HEK293 (cell line): ENCODE measurements at regions of chr1 and their contacts with region 1.

Region 1: GRCh38 chr1:107529502-107530149 is 388.8 kb downstream of the NTNG1 start:
- H3K4me3 ChIP-seq: no peak overlapping the region
- H3K27ac ChIP-seq: no peak overlapping the region
- H3K4me1 ChIP-seq: no peaks in the 10 kb centered on the region
- CTCF ChIP-seq: peak; percentile 61

Region 2: GRCh38 chr1:107277022-107277421 is 252.6 kb before region 1 on chr1:
- CTCF ChIA-PET with region 1: interaction called, 20 read pairs
- POLR2A ChIA-PET with region 1: no interaction called
- H3K4me3 ChIP-seq: no peak overlapping the region
- H3K27ac ChIP-seq: no peak overlapping the region
- H3K4me1 ChIP-seq: no peaks in the 10 kb centered on the region
- CTCF ChIP-seq: peak; percentile 39; the same call in 1 of the 2 replicates

Region 3: GRCh38 chr1:107430540-107431228 is 98.9 kb before region 1 on chr1:
- CTCF ChIA-PET with region 1: interaction called, 46 read pairs
- POLR2A ChIA-PET with region 1: no interaction called
- H3K4me3 ChIP-seq: no peak overlapping the region
- H3K27ac ChIP-seq: no peak overlapping the region
- H3K4me1 ChIP-seq: no peaks in the 10 kb centered on the region
- CTCF ChIP-seq: peak; percentile 66

Region 4: GRCh38 chr1:107477233-107477632 is 52.4 kb before region 1 on chr1:
- CTCF ChIA-PET with region 1: interaction called, 12 read pairs
- POLR2A ChIA-PET with region 1: no interaction called
- H3K4me3 ChIP-seq: no peak overlapping the region
- H3K27ac ChIP-seq: no peak overlapping the region
- H3K4me1 ChIP-seq: no peaks in the 10 kb centered on the region
- CTCF ChIP-seq: 0 out of 2 replicates have a peak, but pooled peaks have one; percentile 11

Region 5: GRCh38 chr1:107515702-107516101 is 13.9 kb before region 1 on chr1:
- CTCF ChIA-PET with region 1: interaction called, 17 read pairs
- POLR2A ChIA-PET with region 1: no interaction called
- H3K4me3 ChIP-seq: no peak overlapping the region
- H3K27ac ChIP-seq: no peak overlapping the region
- H3K4me1 ChIP-seq: no peaks in the 10 kb centered on the region
- CTCF ChIP-seq: no peak

Region 6: DNA sequence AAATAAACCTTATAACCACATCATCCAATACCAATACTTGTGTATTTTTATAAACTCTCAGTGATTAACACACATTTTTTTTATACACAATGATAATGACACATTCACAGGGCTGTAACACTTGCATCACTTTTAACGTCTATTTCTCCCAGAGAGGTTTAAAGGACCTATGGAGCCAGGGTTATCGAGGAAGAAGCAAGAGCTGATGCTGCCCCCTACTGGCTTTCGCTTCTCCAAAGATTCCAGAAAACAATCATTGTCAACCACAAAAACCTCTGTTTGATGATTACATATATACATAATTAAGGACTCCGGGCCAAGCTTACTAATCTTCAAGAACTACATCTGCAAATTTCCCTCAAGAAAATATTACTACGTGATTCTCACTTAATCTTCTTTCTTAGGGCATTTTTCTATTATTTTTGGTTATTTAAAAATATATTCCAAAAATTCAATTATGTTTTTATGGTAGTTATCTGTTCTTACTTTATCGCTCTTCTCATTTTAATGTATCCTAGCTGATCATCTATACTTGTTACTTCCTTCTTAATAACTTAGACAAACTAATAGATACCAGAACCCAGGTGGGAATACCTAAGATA is 220.8 kb after region 1 on chr1:
- CTCF ChIA-PET with region 1: interaction called, 76 read pairs
- POLR2A ChIA-PET with region 1: no interaction called
- H3K4me3 ChIP-seq: no peak overlapping the region
- H3K27ac ChIP-seq: no peak overlapping the region
- H3K4me1 ChIP-seq: no peaks in the 10 kb centered on the region
- CTCF ChIP-seq: peak; percentile 51; the same call in 1 of the 2 replicates